Calu3 (cell line): ENCODE measurements at regions of chr12 and their contacts with region 1.

Region 1: DNA sequence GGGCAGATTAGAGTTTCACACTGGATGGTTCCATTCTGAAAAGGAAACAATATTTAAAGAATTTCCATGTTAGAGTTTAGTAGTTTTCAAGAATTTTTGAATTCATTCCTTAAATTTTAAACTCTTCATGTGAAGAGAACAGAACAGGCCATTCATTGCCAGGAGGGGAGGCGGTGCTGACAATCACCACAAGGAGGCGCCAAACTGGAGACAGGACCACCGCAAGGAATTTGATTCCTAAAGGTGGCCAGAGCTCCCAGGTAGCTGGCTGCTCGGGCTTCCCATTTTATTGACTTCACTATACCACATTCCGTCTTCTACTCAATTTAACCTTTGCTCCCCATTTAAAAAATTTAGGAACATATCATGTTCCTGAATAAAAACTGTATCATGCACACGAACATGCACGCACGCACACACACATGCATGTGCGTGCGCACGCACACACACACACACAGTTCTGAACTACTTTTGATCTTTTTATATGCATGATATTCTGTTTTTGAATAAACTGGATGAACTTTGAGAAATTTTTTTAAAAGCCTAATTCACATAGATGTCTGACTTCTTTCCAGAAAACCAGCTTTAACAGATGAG is 101.2 kb downstream of the NELL2 start:
- DNase-seq: peak; percentile 60
- H3K4me3 Mint-ChIP-seq: no peak overlapping the region
- H3K27ac Mint-ChIP-seq: no peak overlapping the region
- H3K4me1 Mint-ChIP-seq: no peaks in the 10 kb centered on the region
- H3K27me3 Mint-ChIP-seq: no peaks in the 10 kb centered on the region
- CTCF ChIP-seq: peak; percentile 74

Region 2: DNA sequence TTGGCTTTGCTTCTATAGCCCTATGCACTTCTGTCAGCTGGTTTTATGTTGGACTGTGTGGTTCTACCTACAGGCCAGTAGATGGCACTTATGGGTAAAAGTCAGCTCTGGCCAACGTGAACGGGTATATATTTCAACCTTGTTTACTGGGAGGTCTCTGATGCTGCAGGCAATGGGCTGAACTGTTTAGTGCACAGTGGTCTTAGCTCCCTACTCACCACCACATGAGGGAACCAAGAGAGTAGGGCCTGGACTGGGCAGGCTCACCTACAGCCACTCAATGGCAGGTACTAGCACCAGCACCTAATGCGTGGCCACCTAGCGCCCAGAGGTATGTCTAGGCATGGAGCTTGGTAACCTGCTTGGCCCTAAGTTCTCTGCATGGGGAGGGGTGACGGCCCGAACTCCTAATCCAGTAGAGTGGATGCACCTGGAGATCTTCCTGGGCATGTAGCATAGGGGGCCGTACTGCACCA is 457.2 kb before region 1 on chr12:
- CTCF ChIA-PET with region 1: no interaction called
- intact Hi-C with region 1: loop called (anchors 5 kb)
- DNase-seq: peak; percentile 5
- H3K4me3 Mint-ChIP-seq: no peak overlapping the region
- H3K27ac Mint-ChIP-seq: no peak overlapping the region
- H3K4me1 Mint-ChIP-seq: no peaks in the 10 kb centered on the region
- H3K27me3 Mint-ChIP-seq: no peaks in the 10 kb centered on the region
- CTCF ChIP-seq: peak; percentile 41

Region 3: GRCh38 chr12:44759289-44759688 is 15.6 kb before region 1 on chr12:
- CTCF ChIA-PET with region 1: no interaction called
- intact Hi-C with region 1: no loop called
- DNase-seq: no peak
- H3K4me3 Mint-ChIP-seq: no peak overlapping the region
- H3K27ac Mint-ChIP-seq: no peak overlapping the region
- H3K4me1 Mint-ChIP-seq: no peaks in the 10 kb centered on the region
- H3K27me3 Mint-ChIP-seq: no peaks in the 10 kb centered on the region
- CTCF ChIP-seq: no peak

Region 4: DNA sequence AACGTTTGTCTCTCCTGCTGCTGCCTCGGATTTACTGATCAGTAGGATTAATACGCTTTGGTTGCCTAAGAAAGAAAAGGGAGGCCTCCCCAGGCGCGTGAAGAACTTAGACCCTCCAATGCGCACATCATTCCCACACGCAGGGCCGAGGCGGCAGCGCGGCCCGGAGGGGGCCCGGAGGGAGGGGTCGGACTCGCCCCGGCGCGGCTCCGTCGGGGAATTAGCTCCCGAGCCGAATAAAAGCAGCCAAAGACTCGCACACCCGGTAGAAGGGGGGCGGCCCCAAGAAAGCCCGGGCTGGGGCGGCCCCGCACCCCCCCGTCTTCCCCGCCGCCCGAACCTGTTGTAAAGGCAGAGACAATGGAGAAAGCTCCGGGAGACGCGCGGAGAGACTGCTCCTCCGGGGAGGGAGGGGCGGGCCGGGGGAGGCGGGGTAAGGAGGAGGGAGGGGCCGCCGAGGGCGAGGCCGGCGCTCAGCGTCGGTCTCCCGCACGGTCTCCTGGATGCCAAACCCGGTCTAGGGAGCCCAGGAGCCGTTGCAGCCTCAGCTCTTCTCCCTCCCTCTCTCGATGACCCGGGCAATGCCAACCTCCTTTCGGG is 101.1 kb after region 1 on chr12 and contains the start of gene NELL2:
- CTCF ChIA-PET with region 1: interaction called, 4 read pairs
- intact Hi-C with region 1: loop called (anchors 5 kb)
- DNase-seq: peak; percentile 24
- H3K4me3 Mint-ChIP-seq: peak within 1 kb of the TSS; percentile 90
- H3K27ac Mint-ChIP-seq: no peak within 1 kb of the TSS
- H3K4me1 Mint-ChIP-seq: peaks cover 24% of the 10 kb centered on the region
- H3K27me3 Mint-ChIP-seq: peaks cover 49% of the 10 kb centered on the region
- CTCF ChIP-seq: no peak
- total RNA-seq, gene NELL2: 0.42 TPM in 1 of 2 replicates, not detected in the other